ENCODE measurements at regions of chr5 and their contacts with region 1.

Region 1: DNA sequence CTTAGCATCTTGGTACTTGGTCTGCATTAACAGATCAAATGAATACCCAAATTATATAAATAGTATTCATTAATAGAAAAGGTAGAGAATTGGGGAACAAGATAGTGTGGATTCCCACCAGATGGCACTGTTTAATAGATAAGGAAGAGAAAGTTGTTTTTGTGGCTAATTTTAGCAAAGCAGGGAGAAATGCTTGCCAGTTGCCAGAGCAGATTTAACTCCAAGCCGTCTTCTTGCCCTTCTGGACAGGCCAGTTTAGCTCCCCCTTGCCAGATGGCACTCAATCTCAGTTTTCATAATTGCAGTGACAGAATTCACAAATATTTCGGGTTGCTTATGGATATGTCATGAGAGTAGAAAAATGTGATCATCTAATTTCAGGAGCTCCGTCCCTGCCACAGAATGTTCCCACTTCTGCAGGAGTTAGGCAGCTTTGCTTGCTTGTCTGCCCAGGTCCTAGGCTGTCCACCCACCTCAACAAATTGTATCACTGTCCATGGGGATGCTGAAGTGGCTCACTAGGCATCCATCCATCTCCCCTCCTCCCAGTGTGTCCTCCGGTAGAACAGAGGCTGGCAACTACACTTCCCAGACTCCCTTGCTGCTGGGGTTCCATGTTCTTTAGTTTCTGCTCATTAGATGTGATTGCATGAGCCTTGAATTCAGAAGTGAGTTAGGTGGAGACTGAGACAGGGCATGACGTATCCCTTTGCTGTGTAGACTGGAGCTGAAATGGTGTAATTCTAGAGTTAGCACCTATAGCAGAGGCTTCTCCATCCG is 11.8 kb upstream of the HEXB start:
- DNase-seq: no peak
- ATAC-seq: no peak

Region 2: GRCh38 chr5:74587890-74588289 is 85.3 kb before region 1 on chr5:
- intact Hi-C with region 1: no loop called
- DNase-seq: no peak
- ATAC-seq: no peak

Region 3: DNA sequence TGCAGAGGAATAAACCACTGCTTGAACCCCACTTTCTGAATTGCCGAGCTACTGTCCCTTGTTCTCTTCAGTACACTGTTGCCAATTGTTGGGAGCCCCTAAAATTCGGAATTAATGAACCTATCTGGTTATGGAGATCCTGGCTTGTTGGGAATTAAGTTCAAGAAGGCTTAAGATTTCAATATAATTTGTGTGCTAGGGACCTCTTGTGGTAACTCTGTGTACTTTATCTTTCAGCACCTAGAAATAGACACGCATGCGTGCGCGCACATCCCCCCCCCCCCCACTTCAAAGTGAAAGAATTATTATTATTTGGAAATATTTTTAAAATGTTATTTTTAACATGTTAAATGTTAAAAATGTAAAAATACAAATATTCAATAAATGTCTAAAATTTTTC is 246.3 kb after region 1 on chr5:
- intact Hi-C with region 1: loop called in 1 of 2 experiments (anchors 10 kb)
- DNase-seq: no peak
- ATAC-seq: peak; percentile 58

Measured in left colon (tissue), 2 donors.